GM12878 (cell line): ENCODE measurements at regions of chr2 and their contacts with region 1.

Region 1: GRCh38 chr2:179020156-179020750 is 29.7 kb downstream of the CCDC141 start:
- DNase-seq: no peak
- ATAC-seq: peak; percentile 73
- H3K4me3 ChIP-seq: no peak overlapping the region
- H3K27ac ChIP-seq: peak overlapping the region; percentile 71; the same call in 1 of the 2 replicates
- H3K4me1 ChIP-seq: peaks cover 34% of the 10 kb centered on the region
- H3K27me3 ChIP-seq: no peaks in the 10 kb centered on the region
- CTCF ChIP-seq: peak; percentile 68 to 73 (median 69)
- EP300 ChIP-seq: no peak
- POLR2A ChIP-seq: no peak
- RAD21 ChIP-seq: peak; percentile 89

Region 2: GRCh38 chr2:178796079-178796677 is 224.1 kb before region 1 on chr2:
- CTCF ChIA-PET with region 1: interaction called, 36 read pairs
- POLR2A ChIA-PET with region 1: interaction called, 3 read pairs
- RAD21 ChIA-PET with region 1: interaction called, 3 read pairs
- SMC1A ChIA-PET with region 1: interaction called, 9 read pairs
- in situ Hi-C with region 1: no loop called
- intact Hi-C with region 1: loop called (anchors 1 kb)
- DNase-seq: no peak
- ATAC-seq: peak; percentile 46; the same call in 1 of the 3 replicates
- H3K4me3 ChIP-seq: no peak overlapping the region
- H3K27ac ChIP-seq: no peak overlapping the region
- H3K4me1 ChIP-seq: no peaks in the 10 kb centered on the region
- H3K27me3 ChIP-seq: no peaks in the 10 kb centered on the region
- CTCF ChIP-seq: peak; percentile 29 to 57 (median 44); a peak in 3 of 6 replicates
- EP300 ChIP-seq: no peak
- POLR2A ChIP-seq: no peak
- RAD21 ChIP-seq: peak; percentile 62

Region 3: DNA sequence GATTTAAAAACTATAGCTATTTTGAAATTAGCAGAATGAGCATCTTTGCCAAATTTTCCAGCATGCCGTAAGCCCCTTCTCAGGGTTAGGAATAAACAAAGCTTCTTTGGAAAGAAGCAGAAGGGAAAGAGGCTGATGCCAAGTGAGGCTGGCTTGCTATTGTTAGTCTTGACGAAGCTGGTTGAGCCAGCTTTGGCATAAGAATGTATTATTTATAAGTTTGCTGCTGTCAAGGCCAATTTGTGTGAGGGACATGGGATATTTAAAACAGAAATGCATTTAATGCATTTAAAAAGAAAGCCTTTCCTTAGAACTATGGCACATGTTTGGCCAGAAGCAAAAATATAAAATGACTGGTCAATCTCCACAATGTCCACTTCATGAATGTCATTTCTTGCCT is 160.5 kb before region 1 on chr2:
- CTCF ChIA-PET with region 1: no interaction called
- POLR2A ChIA-PET with region 1: no interaction called
- RAD21 ChIA-PET with region 1: no interaction called
- SMC1A ChIA-PET with region 1: no interaction called
- in situ Hi-C with region 1: no loop called
- intact Hi-C with region 1: no loop called
- DNase-seq: no peak
- ATAC-seq: no peak
- H3K4me3 ChIP-seq: no peak overlapping the region
- H3K27ac ChIP-seq: no peak overlapping the region
- H3K4me1 ChIP-seq: no peaks in the 10 kb centered on the region
- H3K27me3 ChIP-seq: no peaks in the 10 kb centered on the region
- CTCF ChIP-seq: no peak
- EP300 ChIP-seq: no peak
- POLR2A ChIP-seq: no peak
- RAD21 ChIP-seq: no peak

Region 4: GRCh38 chr2:178914259-178914849 is 105.9 kb before region 1 on chr2:
- CTCF ChIA-PET with region 1: interaction called, 45 read pairs
- POLR2A ChIA-PET with region 1: no interaction called
- RAD21 ChIA-PET with region 1: interaction called, 4 read pairs
- SMC1A ChIA-PET with region 1: interaction called, 76 read pairs
- in situ Hi-C with region 1: no loop called
- intact Hi-C with region 1: loop called (anchors 2 kb)
- DNase-seq: peak; percentile 39
- ATAC-seq: peak; percentile 95
- H3K4me3 ChIP-seq: no peak overlapping the region
- H3K27ac ChIP-seq: no peak overlapping the region
- H3K4me1 ChIP-seq: no peaks in the 10 kb centered on the region
- H3K27me3 ChIP-seq: no peaks in the 10 kb centered on the region
- CTCF ChIP-seq: peak; percentile 75 to 84 (median 75)
- EP300 ChIP-seq: no peak
- POLR2A ChIP-seq: no peak
- RAD21 ChIP-seq: peak; percentile 59

Region 5: DNA sequence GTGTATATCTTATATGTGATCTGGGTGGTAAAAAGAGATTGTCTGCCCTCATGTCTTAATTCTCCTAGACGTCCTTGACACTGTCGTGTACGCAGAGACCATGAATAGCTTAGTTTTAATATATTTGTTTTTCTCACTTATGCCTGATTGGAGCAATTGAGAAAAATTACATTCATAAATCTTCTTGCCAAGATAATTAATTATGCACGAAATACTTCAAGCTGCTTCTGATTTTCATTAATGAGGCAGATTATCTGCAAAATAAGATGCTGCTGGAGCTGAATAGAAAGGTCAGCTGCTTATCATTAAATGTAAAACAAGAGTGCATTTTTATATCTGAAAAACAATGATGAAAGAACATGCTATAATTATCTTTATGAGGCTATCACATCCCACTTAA is 66.2 kb before region 1 on chr2:
- CTCF ChIA-PET with region 1: interaction called, 3 read pairs
- POLR2A ChIA-PET with region 1: no interaction called
- RAD21 ChIA-PET with region 1: no interaction called
- SMC1A ChIA-PET with region 1: interaction called, 11 read pairs
- in situ Hi-C with region 1: no loop called
- intact Hi-C with region 1: no loop called
- DNase-seq: no peak
- ATAC-seq: no peak
- H3K4me3 ChIP-seq: no peak overlapping the region
- H3K27ac ChIP-seq: no peak overlapping the region
- H3K4me1 ChIP-seq: no peaks in the 10 kb centered on the region
- H3K27me3 ChIP-seq: no peaks in the 10 kb centered on the region
- CTCF ChIP-seq: no peak
- EP300 ChIP-seq: no peak
- POLR2A ChIP-seq: no peak
- RAD21 ChIP-seq: no peak

Region 6: GRCh38 chr2:179005976-179006375 is 14.3 kb before region 1 on chr2:
- CTCF ChIA-PET with region 1: interaction called, 13 read pairs
- POLR2A ChIA-PET with region 1: no interaction called
- RAD21 ChIA-PET with region 1: interaction called, 3 read pairs
- SMC1A ChIA-PET with region 1: interaction called, 24 read pairs
- in situ Hi-C with region 1: no loop called
- intact Hi-C with region 1: no loop called
- DNase-seq: no peak
- ATAC-seq: no peak
- H3K4me3 ChIP-seq: no peak overlapping the region
- H3K27ac ChIP-seq: no peak overlapping the region
- H3K4me1 ChIP-seq: no peaks in the 10 kb centered on the region
- H3K27me3 ChIP-seq: no peaks in the 10 kb centered on the region
- CTCF ChIP-seq: no peak
- EP300 ChIP-seq: no peak
- POLR2A ChIP-seq: no peak
- RAD21 ChIP-seq: no peak

Region 7: GRCh38 chr2:179049546-179050311 is 29.5 kb after region 1 on chr2 and contains the start of gene CCDC141:
- CTCF ChIA-PET with region 1: interaction called, 41 read pairs
- POLR2A ChIA-PET with region 1: interaction called, 44 read pairs
- RAD21 ChIA-PET with region 1: interaction called, 51 read pairs
- SMC1A ChIA-PET with region 1: interaction called, 89 read pairs
- in situ Hi-C with region 1: no loop called
- intact Hi-C with region 1: loop called (anchors 1 kb)
- DNase-seq: peak; percentile 37
- ATAC-seq: peak; percentile 77
- H3K4me3 ChIP-seq: peak within 1 kb of the TSS; percentile 68
- H3K27ac ChIP-seq: peak within 1 kb of the TSS; percentile 69
- H3K4me1 ChIP-seq: peaks cover 31% of the 10 kb centered on the region
- H3K27me3 ChIP-seq: no peaks in the 10 kb centered on the region
- CTCF ChIP-seq: no peak
- EP300 ChIP-seq: 0 out of 4 replicates have a peak, but pooled peaks of 1 of the 2 experiments have one; percentile 15
- POLR2A ChIP-seq: peak; percentile 35; the same call in 1 of the 2 replicates
- RAD21 ChIP-seq: no peak
- polyA plus RNA-seq, gene CCDC141: 0.84 to 2.1 TPM

Region 8: DNA sequence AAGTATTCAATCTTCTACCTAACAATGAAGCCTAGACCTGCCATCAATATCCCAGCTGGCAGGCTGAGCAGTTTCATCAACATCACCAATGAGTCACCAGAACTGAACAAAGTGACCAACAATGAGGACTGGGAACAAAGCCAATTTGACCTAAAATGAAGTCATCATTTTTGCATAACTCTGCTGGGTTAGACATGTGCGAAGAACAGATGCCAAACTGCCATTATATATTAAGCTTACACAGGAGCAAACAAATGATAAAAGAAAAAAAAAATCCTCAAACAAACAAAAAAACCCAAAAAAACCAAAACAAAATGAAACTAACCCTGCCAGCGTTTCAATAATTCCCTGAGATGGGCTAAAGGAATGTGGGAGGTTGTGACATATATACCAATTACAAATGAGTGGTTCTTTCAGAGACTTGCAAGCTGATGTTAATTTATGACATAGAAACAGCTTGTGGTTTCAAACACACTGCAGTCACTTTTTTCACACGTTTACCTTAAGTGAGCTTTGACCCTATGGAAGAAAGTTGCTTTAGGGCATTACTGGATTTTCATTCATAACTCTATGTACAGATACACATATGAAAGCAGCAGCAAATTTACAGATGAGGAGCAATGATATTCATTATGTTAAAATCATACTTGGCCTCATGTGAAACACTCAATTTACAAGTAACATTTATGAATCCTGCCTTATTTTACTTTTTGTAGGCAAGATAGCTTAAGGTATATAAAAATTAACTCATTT is 86.6 kb after region 1 on chr2:
- CTCF ChIA-PET with region 1: interaction called, 43 read pairs
- POLR2A ChIA-PET with region 1: interaction called, 32 read pairs
- RAD21 ChIA-PET with region 1: interaction called, 74 read pairs
- SMC1A ChIA-PET with region 1: interaction called, 93 read pairs
- in situ Hi-C with region 1: no loop called
- intact Hi-C with region 1: no loop called
- DNase-seq: peak; percentile 56
- ATAC-seq: peak; percentile 87
- H3K4me3 ChIP-seq: no peak overlapping the region
- H3K27ac ChIP-seq: no peak overlapping the region
- H3K4me1 ChIP-seq: peaks cover 14% of the 10 kb centered on the region; the same call in 1 of the 2 replicates
- H3K27me3 ChIP-seq: no peaks in the 10 kb centered on the region
- CTCF ChIP-seq: no peak
- EP300 ChIP-seq: 0 out of 4 replicates have a peak, but pooled peaks of 1 of the 2 experiments have one; percentile 44
- POLR2A ChIP-seq: no peak
- RAD21 ChIP-seq: no peak

Region 9: GRCh38 chr2:179965291-179966258 is 945.3 kb after region 1 on chr2:
- CTCF ChIA-PET with region 1: no interaction called
- POLR2A ChIA-PET with region 1: no interaction called
- RAD21 ChIA-PET with region 1: no interaction called
- SMC1A ChIA-PET with region 1: no interaction called
- in situ Hi-C with region 1: no loop called
- intact Hi-C with region 1: no loop called
- DNase-seq: no peak
- ATAC-seq: no peak
- H3K4me3 ChIP-seq: no peak overlapping the region
- H3K27ac ChIP-seq: no peak overlapping the region
- H3K4me1 ChIP-seq: no peaks in the 10 kb centered on the region
- H3K27me3 ChIP-seq: no peaks in the 10 kb centered on the region
- CTCF ChIP-seq: no peak
- EP300 ChIP-seq: no peak
- POLR2A ChIP-seq: no peak
- RAD21 ChIP-seq: no peak